ENCODE measurements at regions of chr10 and their contacts with region 1.

Region 1: DNA sequence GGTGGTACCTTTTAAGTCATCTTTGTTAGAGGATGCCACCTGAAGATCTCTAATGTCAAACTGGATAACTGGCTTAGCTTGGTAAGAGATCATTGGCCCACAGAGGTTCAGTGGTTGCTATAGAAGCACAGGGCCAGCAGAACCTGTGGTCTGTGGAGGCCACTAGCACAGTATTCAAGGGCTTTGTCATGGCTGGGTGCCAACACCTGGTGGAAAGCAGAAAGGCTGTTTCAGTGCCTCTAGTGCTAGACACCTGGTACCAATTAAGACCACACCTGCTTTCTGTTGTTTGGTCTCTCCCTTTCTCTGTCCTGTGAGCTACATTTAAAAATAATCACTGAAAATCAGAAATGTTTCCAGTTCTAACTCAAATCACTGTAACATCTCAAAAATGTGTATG is 10.0 kb upstream of the PCGF5 start:
- DNase-seq: peak; percentile 6
- H3K4me3 Mint-ChIP-seq: no peak overlapping the region
- H3K27ac Mint-ChIP-seq: no peak overlapping the region
- H3K4me1 Mint-ChIP-seq: no peaks in the 10 kb centered on the region
- H3K27me3 Mint-ChIP-seq: no peaks in the 10 kb centered on the region
- CTCF ChIP-seq: no peak

Region 2: DNA sequence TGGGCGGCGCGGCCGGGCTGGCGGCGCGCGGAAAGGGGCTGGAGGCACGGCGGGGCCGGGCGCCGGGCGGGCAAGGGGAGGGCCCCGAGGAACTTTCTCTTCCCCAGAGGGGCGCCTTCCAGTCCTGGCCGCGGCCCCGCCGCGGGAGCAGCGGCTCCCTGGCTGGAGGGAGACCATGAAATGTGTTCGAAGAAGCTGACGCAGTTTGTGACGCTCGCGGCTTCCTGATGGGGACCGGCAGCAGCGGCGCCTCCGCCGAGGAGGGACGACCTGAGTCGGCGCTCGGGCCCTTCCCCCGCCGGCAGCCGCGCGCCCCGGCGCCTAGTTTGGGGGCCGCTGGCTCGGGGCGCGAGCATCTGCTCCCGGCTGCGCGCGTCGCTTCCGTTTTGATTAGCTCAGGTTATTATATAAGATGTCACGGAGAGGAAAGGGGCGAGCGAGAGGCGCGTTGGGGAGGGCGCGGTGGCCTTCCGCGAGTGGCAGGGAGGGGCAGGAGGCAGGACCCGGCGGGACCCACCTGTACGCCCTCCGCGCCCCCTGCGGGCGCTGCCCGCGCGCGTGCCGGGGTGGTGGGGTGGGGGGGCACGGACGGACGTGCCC is 47.1 kb before region 1 on chr10:
- CTCF ChIA-PET with region 1: no interaction called
- intact Hi-C with region 1: loop called (anchors 10 kb)
- DNase-seq: peak; percentile 42
- H3K4me3 Mint-ChIP-seq: peak overlapping the region; percentile 83
- H3K27ac Mint-ChIP-seq: peak overlapping the region; percentile 50
- H3K4me1 Mint-ChIP-seq: peaks cover 21% of the 10 kb centered on the region
- H3K27me3 Mint-ChIP-seq: peaks cover 20% of the 10 kb centered on the region
- CTCF ChIP-seq: no peak